ENCODE measurements at regions of chr11 and their contacts with region 1.

Region 1: DNA sequence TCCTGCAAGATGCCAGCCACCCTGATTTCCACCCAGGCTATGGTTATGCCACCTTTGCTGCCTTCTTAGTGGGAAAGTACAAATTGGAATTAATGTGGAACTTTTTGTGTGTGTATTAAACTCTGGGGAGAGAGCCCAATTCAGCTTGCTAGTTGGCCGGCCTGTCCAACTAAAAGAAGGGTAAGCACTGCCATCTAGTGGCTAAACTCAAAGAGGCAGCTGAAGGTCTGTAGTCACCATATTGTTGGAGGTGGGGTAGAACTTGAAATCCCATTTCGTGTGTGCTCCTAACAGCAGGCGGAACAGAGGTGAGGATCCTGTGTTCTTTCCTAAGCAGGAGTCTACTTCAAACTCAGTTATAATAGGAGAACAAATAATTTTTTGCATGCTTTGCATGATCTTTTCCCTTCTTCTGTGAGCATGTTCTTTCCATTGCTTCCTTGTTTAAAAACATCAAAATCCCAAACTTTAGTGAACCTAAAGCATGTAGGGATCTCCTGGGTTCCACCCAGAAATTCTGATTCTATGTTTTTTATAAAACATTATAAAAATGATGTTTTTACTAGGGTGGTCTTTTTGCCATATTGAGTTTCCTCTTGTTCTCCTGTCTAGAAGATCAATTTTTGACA is 138.8 kb upstream of the SORL1-AS1 start:
- DNase-seq: peak; percentile 82
- ATAC-seq: peak; percentile 71
- H3K4me3 ChIP-seq: peak overlapping the region; percentile 37; the same call in 1 of the 2 replicates
- H3K27ac ChIP-seq: peak overlapping the region; percentile 75
- H3K4me1 ChIP-seq: peaks cover 47% of the 10 kb centered on the region
- H3K27me3 ChIP-seq: no peaks in the 10 kb centered on the region
- CTCF ChIP-seq: peak; percentile 79 to 92 (median 88)
- EP300 ChIP-seq: no peak
- POLR2A ChIP-seq: no peak
- RAD21 ChIP-seq: peak; percentile 97

Region 2: GRCh38 chr11:121194731-121195596 is 396.6 kb before region 1 on chr11:
- CTCF ChIA-PET with region 1: no interaction called
- POLR2A ChIA-PET with region 1: no interaction called
- RAD21 ChIA-PET with region 1: no interaction called
- SMC1A ChIA-PET with region 1: no interaction called
- in situ Hi-C with region 1: no loop called
- intact Hi-C with region 1: loop called (anchors 5 kb)
- DNase-seq: peak; percentile 31
- ATAC-seq: peak; percentile 99
- H3K4me3 ChIP-seq: no peak overlapping the region
- H3K27ac ChIP-seq: no peak overlapping the region
- H3K4me1 ChIP-seq: no peaks in the 10 kb centered on the region
- H3K27me3 ChIP-seq: no peaks in the 10 kb centered on the region
- CTCF ChIP-seq: peak; percentile 72 to 84 (median 83)
- EP300 ChIP-seq: no peak
- POLR2A ChIP-seq: no peak
- RAD21 ChIP-seq: peak; percentile 86

Region 3: GRCh38 chr11:121309688-121310087 is 281.8 kb before region 1 on chr11:
- CTCF ChIA-PET with region 1: interaction called, 28 read pairs
- POLR2A ChIA-PET with region 1: no interaction called
- RAD21 ChIA-PET with region 1: no interaction called
- SMC1A ChIA-PET with region 1: interaction called, 11 read pairs
- in situ Hi-C with region 1: no loop called
- intact Hi-C with region 1: no loop called
- DNase-seq: no peak
- ATAC-seq: peak; percentile 96
- H3K4me3 ChIP-seq: peak overlapping the region; percentile 51; the same call in 1 of the 2 replicates
- H3K27ac ChIP-seq: peak overlapping the region; percentile 49
- H3K4me1 ChIP-seq: peaks cover 14% of the 10 kb centered on the region
- H3K27me3 ChIP-seq: no peaks in the 10 kb centered on the region
- CTCF ChIP-seq: no peak
- EP300 ChIP-seq: 0 out of 4 replicates have a peak, but pooled peaks of 1 of the 2 experiments have one; percentile 33
- POLR2A ChIP-seq: no peak
- RAD21 ChIP-seq: no peak

Region 4: DNA sequence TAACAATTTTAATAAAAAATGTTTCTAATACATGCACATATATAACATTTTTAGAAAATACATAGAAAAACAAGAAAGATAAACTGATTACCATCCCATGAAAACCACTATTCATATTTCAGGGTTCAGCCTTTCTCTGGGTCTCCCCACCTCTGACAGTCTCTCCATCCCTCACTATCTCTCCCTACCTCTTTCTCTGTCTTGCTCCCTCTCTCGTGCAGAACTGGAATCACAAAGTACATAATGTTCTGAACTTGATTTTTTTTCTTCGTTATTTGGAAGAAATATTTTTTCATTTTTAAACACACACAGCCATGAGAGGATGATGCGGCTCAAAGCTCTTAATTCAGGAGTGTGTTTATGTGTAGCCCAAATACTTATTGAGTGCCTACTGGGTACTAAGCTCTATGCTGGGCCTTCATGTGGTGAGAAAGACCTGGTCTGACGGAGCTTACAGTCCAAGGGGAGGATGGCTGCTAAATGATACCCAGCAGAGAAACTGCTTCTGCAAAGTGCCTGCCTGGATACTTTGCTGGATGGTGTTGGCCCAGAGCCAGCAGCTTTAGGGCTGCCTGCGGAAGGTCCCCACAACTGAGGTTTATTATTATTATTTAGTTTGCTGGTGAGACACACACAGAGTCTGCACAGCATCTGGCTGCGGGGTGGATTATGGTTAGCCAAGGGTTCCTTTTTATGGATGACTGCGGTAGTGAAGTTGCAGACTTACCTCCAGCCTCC is 256.4 kb before region 1 on chr11:
- CTCF ChIA-PET with region 1: interaction called, 14 read pairs
- POLR2A ChIA-PET with region 1: interaction called, 3 read pairs
- RAD21 ChIA-PET with region 1: interaction called, 9 read pairs
- SMC1A ChIA-PET with region 1: interaction called, 26 read pairs
- in situ Hi-C with region 1: no loop called
- intact Hi-C with region 1: no loop called
- DNase-seq: no peak
- ATAC-seq: no peak
- H3K4me3 ChIP-seq: no peak overlapping the region
- H3K27ac ChIP-seq: no peak overlapping the region
- H3K4me1 ChIP-seq: peaks cover 49% of the 10 kb centered on the region
- H3K27me3 ChIP-seq: no peaks in the 10 kb centered on the region
- CTCF ChIP-seq: peak in 1 of 3 experiments; percentile 9; a peak in 1 of 6 replicates
- EP300 ChIP-seq: no peak
- POLR2A ChIP-seq: no peak
- RAD21 ChIP-seq: no peak

Region 5: GRCh38 chr11:121446752-121447156 is 144.8 kb before region 1 on chr11:
- CTCF ChIA-PET with region 1: interaction called, 50 read pairs
- POLR2A ChIA-PET with region 1: interaction called, 5 read pairs
- RAD21 ChIA-PET with region 1: interaction called, 63 read pairs
- SMC1A ChIA-PET with region 1: interaction called, 57 read pairs
- in situ Hi-C with region 1: no loop called
- intact Hi-C with region 1: loop called (anchors 1 kb)
- DNase-seq: no peak
- ATAC-seq: peak; percentile 42
- H3K4me3 ChIP-seq: no peak overlapping the region
- H3K27ac ChIP-seq: peak overlapping the region; percentile 76
- H3K4me1 ChIP-seq: peaks cover 59% of the 10 kb centered on the region
- H3K27me3 ChIP-seq: no peaks in the 10 kb centered on the region
- CTCF ChIP-seq: peak in 2 of 3 experiments; percentile 19 to 37; a peak in 4 of 6 replicates
- EP300 ChIP-seq: no peak
- POLR2A ChIP-seq: no peak
- RAD21 ChIP-seq: peak; percentile 48

Region 6: DNA sequence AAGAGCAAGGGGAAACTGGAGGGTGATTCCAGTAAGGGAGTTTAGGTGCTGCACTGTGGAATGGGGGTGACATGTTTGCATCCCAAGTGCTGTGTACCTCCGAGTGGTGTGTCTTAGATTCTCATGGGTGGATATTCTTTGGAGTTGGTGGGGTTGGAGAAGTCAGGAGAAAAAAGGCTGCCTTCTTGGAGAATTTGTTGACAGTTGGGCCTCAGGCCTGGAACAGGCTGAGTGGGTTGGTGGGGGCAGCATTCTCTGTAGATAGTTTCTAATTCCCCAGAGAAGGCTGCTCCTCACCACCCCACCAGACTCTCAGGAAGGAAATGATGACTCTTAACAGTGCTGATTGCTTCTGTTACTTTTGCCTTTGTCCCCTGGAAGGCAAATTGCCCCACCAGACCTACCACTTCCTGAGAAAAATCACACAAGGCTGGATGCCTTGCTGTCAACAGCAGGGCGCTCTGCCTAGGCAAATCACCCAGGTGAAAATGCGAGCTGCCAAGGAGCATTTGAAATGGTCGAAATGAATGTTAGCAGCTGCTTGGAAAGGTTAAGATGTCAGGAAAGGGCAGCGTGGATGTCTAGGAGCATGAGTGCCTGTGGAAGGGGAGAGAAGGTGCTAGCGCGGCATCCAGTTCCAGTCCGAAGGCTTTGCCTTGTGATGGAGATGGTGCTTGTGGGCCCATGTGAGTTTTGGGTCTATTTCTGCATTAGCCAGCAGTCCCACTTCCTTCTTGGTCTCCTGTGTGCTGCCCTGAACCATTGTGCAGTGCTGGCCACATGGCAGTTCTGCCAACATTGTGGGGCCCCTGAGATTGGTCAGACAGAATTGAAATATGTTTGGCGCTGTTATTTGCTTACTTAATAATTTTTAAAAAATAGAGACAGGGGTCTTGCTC is 109.0 kb before region 1 on chr11:
- CTCF ChIA-PET with region 1: interaction called, 11 read pairs
- POLR2A ChIA-PET with region 1: no interaction called
- RAD21 ChIA-PET with region 1: interaction called, 3 read pairs
- SMC1A ChIA-PET with region 1: no interaction called
- in situ Hi-C with region 1: no loop called
- intact Hi-C with region 1: no loop called
- DNase-seq: peak; percentile 93
- ATAC-seq: peak; percentile 93
- H3K4me3 ChIP-seq: peak overlapping the region; percentile 36
- H3K27ac ChIP-seq: peak overlapping the region; percentile 77
- H3K4me1 ChIP-seq: peaks cover 37% of the 10 kb centered on the region
- H3K27me3 ChIP-seq: no peaks in the 10 kb centered on the region
- CTCF ChIP-seq: no peak
- EP300 ChIP-seq: peak in 1 of 2 experiments; percentile 40; a peak in 1 of 4 replicates
- POLR2A ChIP-seq: no peak
- RAD21 ChIP-seq: no peak

Region 7: GRCh38 chr11:121557348-121557747 is 34.2 kb before region 1 on chr11:
- CTCF ChIA-PET with region 1: interaction called, 4 read pairs
- POLR2A ChIA-PET with region 1: no interaction called
- RAD21 ChIA-PET with region 1: interaction called, 6 read pairs
- SMC1A ChIA-PET with region 1: interaction called, 9 read pairs
- in situ Hi-C with region 1: no loop called
- intact Hi-C with region 1: loop called (anchors 1 kb)
- DNase-seq: peak; percentile 96
- ATAC-seq: peak; percentile 95
- H3K4me3 ChIP-seq: no peak overlapping the region
- H3K27ac ChIP-seq: peak overlapping the region; percentile 80
- H3K4me1 ChIP-seq: peaks cover 30% of the 10 kb centered on the region
- H3K27me3 ChIP-seq: no peaks in the 10 kb centered on the region
- CTCF ChIP-seq: no peak
- EP300 ChIP-seq: peak; percentile 41 to 67; a peak in 3 of 4 replicates
- POLR2A ChIP-seq: no peak
- RAD21 ChIP-seq: no peak

Region 8: DNA sequence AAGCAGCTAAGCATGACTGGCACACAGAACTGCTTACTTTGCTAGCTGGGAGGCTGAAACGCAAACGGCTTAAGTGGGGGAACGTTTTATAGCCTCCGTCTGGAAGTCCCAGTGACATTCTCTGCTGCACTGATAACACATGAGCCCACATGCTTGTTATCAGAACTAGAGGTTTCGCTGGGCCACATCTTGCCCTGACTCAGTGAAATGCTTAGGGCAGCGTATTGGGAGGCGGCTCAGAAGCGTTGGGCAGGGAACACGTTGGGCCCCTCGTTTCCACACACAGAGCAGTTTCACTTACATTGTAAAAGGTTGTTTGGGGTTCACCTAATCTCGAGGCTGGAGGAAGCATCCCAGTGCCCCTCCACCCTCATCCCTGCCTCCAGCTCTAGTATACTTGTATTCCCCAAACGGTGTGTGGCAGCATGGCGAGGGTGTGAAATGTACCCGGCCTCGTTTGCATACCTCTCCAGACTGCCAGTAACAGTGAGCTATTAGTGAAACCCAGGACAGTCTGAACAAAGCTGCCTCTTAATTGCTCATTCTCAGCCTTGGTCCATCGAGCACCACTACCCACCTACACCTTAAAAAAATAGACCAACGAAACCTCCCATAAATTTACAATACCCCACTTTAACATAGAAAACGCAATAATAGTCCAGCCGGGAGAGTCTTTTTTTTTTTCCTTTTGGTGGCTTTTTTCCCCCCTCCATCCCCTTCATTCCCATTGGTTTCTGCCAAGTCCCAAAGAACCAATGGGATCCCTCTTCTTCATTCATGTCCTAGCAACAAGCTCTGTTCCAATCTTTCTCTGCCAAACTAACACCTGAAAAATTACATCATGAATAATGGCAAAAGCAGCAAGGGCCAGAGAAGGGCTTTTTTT is 80.0 kb after region 1 on chr11:
- CTCF ChIA-PET with region 1: no interaction called
- POLR2A ChIA-PET with region 1: no interaction called
- RAD21 ChIA-PET with region 1: no interaction called
- SMC1A ChIA-PET with region 1: no interaction called
- in situ Hi-C with region 1: no loop called
- intact Hi-C with region 1: no loop called
- DNase-seq: no peak
- ATAC-seq: no peak
- H3K4me3 ChIP-seq: no peak overlapping the region
- H3K27ac ChIP-seq: no peak overlapping the region
- H3K4me1 ChIP-seq: no peaks in the 10 kb centered on the region
- H3K27me3 ChIP-seq: no peaks in the 10 kb centered on the region
- CTCF ChIP-seq: no peak
- EP300 ChIP-seq: no peak
- POLR2A ChIP-seq: no peak
- RAD21 ChIP-seq: no peak

Region 9: GRCh38 chr11:122101625-122102291 is 510.2 kb after region 1 on chr11:
- CTCF ChIA-PET with region 1: no interaction called
- POLR2A ChIA-PET with region 1: no interaction called
- RAD21 ChIA-PET with region 1: no interaction called
- SMC1A ChIA-PET with region 1: no interaction called
- in situ Hi-C with region 1: no loop called
- intact Hi-C with region 1: no loop called
- DNase-seq: no peak
- ATAC-seq: no peak
- H3K4me3 ChIP-seq: no peak overlapping the region
- H3K27ac ChIP-seq: no peak overlapping the region
- H3K4me1 ChIP-seq: no peaks in the 10 kb centered on the region
- H3K27me3 ChIP-seq: peaks cover 0 to 20% of the 10 kb centered on the region in 2 experiments; a peak in 3 of 4 replicates
- CTCF ChIP-seq: no peak
- EP300 ChIP-seq: no peak
- POLR2A ChIP-seq: no peak
- RAD21 ChIP-seq: no peak